OCI-LY7 (cell line): ENCODE measurements at regions of chr1 and their contacts with region 1.

Region 1: DNA sequence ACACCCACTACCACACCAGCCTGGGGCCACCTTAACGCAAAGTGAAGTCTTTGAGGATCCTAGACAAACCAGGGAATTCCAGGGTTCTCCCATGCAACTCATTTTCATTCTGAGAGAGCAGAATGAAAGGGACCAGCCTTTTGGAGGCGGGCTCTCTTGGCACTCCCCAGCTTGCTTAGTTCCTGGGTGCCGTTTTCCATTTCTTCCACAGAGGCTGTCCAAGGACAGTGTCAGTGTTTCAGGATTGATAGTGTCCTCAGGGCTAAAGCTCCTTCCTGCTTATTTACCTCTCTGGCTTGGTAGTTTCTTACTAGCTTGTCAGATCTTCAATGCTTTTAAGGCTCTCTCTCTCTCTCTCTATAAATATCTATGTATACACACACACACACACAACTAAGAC is 30.1 kb upstream of the GNG4 start:
- DNase-seq: no peak
- H3K4me3 ChIP-seq: no peak overlapping the region
- H3K27ac ChIP-seq: no peak overlapping the region
- H3K4me1 ChIP-seq: no peaks in the 10 kb centered on the region
- CTCF ChIP-seq: no peak

Region 2: GRCh38 chr1:235628316-235629005 is 51.2 kb before region 1 on chr1:
- CTCF ChIA-PET with region 1: no interaction called
- POLR2A ChIA-PET with region 1: interaction called, 10 read pairs
- intact Hi-C with region 1: no loop called
- DNase-seq: no peak
- H3K4me3 ChIP-seq: no peak overlapping the region
- H3K27ac ChIP-seq: no peak overlapping the region
- H3K4me1 ChIP-seq: no peaks in the 10 kb centered on the region
- CTCF ChIP-seq: no peak

Region 3: GRCh38 chr1:235703506-235703905 is 23.9 kb after region 1 on chr1:
- CTCF ChIA-PET with region 1: no interaction called
- POLR2A ChIA-PET with region 1: no interaction called
- intact Hi-C with region 1: no loop called
- DNase-seq: no peak
- H3K4me3 ChIP-seq: no peak overlapping the region
- H3K27ac ChIP-seq: no peak overlapping the region
- H3K4me1 ChIP-seq: no peaks in the 10 kb centered on the region
- CTCF ChIP-seq: no peak

Region 4: DNA sequence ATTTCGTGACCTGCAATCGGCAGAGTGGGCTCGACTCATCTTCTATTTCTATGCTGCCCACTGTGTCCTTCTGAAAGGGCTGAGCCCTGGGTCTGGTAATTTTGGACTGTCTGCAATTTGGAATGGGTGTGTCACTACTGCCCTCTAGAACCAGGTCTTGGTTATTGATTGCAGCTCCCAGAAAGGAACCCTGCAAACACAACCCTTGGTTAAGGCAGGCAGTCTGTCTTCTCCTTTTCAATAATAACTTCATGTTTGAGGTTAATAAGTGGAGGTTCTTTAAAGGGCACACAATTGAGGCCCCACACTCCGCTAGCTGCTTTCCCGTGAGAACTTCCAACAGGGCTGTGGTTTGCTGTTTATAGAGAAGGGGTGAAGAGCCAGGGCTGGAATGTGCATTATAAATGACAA is 266.9 kb after region 1 on chr1:
- CTCF ChIA-PET with region 1: no interaction called
- POLR2A ChIA-PET with region 1: no interaction called
- intact Hi-C with region 1: no loop called
- DNase-seq: peak; percentile 13
- H3K4me3 ChIP-seq: no peak overlapping the region
- H3K27ac ChIP-seq: no peak overlapping the region
- H3K4me1 ChIP-seq: no peaks in the 10 kb centered on the region
- CTCF ChIP-seq: peak; percentile 61